ENCODE measurements at regions of chr2 and their contacts with region 1.

Region 1: GRCh38 chr2:25521665-25522387 is 151.6 kb downstream of the DTNB start:
- DNase-seq: peak; percentile 34
- ATAC-seq: peak; percentile 98
- H3K4me3 Mint-ChIP-seq: peak overlapping the region; percentile 24
- H3K27ac Mint-ChIP-seq: peak overlapping the region; percentile 77
- H3K4me1 Mint-ChIP-seq: peaks cover 7% of the 10 kb centered on the region
- H3K27me3 Mint-ChIP-seq: no peaks in the 10 kb centered on the region

Region 2: DNA sequence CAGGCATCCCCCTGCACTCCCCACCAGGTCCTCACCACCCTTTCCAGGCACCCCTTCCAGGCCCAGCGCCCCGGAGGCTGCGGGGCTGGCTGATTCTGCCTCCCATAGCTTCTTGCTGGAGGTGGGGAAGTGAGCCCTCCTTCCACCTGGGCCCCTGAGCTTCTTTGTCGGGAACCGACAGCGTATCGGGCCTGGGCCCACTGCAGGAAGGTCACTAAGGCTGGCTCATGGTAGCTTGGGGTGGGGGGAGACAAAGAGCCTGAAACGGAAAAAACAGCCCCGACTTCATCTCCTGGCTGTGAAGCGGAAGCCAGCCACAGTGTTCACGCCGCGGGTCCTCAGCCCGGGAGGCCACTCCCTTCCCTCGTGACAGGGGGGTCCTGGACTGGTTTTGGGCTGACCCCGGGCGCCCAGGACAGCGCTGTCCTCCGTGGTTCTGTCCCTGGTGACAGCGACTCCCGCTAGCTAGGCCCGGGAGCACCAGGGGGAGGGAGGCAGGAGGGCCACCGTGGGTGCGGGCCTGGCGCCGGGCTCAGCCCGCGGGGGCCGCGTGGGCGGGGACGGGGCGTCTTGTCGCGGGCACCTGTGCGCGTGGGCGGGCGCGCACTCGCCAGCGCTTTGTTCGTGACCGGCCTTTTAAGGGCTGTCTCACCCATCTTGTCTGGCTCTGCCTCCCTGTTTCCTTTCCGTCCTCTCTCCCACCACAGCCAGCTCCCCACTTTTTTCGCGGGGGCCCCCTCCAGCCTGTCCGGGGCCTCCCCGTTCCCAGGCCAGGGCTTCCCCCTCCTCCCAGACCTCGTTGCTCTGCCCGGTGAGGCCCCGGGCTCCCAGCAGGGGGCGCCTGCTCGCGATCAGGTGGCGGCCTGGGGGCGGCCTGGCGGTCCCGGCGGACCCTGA is 245.0 kb before region 1 on chr2:
- CTCF ChIA-PET with region 1: interaction called, 3 read pairs
- POLR2A ChIA-PET with region 1: interaction called, 3 read pairs
- intact Hi-C with region 1: loop called in 1 of 2 experiments (anchors 1 kb)
- DNase-seq: peak; percentile 90
- ATAC-seq: peak; percentile 65
- H3K4me3 Mint-ChIP-seq: peak overlapping the region; percentile 9
- H3K27ac Mint-ChIP-seq: peak overlapping the region; percentile 90
- H3K4me1 Mint-ChIP-seq: peaks cover 70% of the 10 kb centered on the region
- H3K27me3 Mint-ChIP-seq: no peaks in the 10 kb centered on the region

Region 3: GRCh38 chr2:25342372-25343186 is 179.2 kb before region 1 on chr2:
- CTCF ChIA-PET with region 1: no interaction called
- POLR2A ChIA-PET with region 1: no interaction called
- intact Hi-C with region 1: loop called (anchors 1 kb)
- DNase-seq: peak; percentile 90
- ATAC-seq: peak; percentile 80
- H3K4me3 Mint-ChIP-seq: peak overlapping the region; percentile 75
- H3K27ac Mint-ChIP-seq: no peak overlapping the region
- H3K4me1 Mint-ChIP-seq: peaks cover 39% of the 10 kb centered on the region
- H3K27me3 Mint-ChIP-seq: no peaks in the 10 kb centered on the region

Region 4: GRCh38 chr2:25453199-25453905 is 68.5 kb before region 1 on chr2:
- CTCF ChIA-PET with region 1: interaction called, 3 read pairs
- POLR2A ChIA-PET with region 1: no interaction called
- intact Hi-C with region 1: loop called in 1 of 2 experiments (anchors 2 kb)
- DNase-seq: peak; percentile 69
- ATAC-seq: peak; percentile 97
- H3K4me3 Mint-ChIP-seq: peak overlapping the region; percentile 19
- H3K27ac Mint-ChIP-seq: peak overlapping the region; percentile 91
- H3K4me1 Mint-ChIP-seq: peaks cover 30% of the 10 kb centered on the region
- H3K27me3 Mint-ChIP-seq: no peaks in the 10 kb centered on the region

Region 5: GRCh38 chr2:27071277-27071989 is 1549.6 kb after region 1 on chr2 and contains the start of gene OST4:
- CTCF ChIA-PET with region 1: no interaction called
- POLR2A ChIA-PET with region 1: no interaction called
- intact Hi-C with region 1: no loop called
- DNase-seq: peak; percentile 94
- ATAC-seq: peak; percentile 89
- H3K4me3 Mint-ChIP-seq: peak within 1 kb of the TSS; percentile 96
- H3K27ac Mint-ChIP-seq: peak within 1 kb of the TSS; percentile 91
- H3K4me1 Mint-ChIP-seq: peaks cover 66% of the 10 kb centered on the region
- H3K27me3 Mint-ChIP-seq: no peaks in the 10 kb centered on the region
- total RNA-seq, gene OST4: 305 to 406 TPM

Measured in activated CD4-positive, alpha-beta T cell treated with anti-CD3 and anti-CD28 coated beads for 36 hours (primary cell).